Heart right ventricle (tissue), 16 donors: ENCODE measurements at regions of chr4 and their contacts with region 1.

Region 1: DNA sequence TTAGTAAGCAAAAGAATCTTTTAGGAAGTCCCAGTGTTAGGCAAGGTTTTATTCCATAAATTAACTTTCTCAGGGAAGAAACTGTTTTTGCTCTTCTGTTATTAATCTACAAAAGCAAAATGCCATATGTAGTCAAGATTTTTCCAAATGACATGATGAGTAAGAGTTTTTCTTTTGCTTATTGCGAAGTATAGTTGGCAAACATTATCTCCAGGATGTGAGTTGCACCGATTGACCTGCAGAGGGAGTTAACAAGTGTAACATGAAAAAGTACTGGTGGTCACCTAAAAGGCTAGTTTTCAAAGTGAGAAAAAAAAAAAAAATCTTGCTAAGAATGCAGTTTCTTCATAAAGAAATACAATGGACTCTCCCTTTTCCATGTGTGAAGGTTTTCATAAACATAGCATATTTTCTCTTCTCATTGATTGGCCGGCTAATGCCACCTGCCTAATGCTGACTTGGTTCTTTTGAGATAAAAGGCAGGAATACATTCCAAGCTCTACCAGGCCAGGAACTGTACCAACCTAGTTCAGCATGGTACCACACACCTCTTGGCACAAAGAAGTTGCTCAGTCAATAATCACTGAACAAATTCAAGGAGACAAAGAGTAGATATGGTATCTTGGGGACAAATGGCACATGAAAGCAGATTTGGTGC is 100.2 kb downstream of the LNX1 start:
- DNase-seq: peak in 1 of 2 donors; percentile 30
- ATAC-seq: peak in 6 of 8 donors; percentile 42 to 72 (median 52)
- H3K4me3 ChIP-seq: no peak overlapping the region
- H3K27ac ChIP-seq: peak overlapping the region in 4 of 10 donors; percentile 12 to 65 (median 25)
- H3K4me1 ChIP-seq: peaks cover 0 to 16% (median 8%) of the 10 kb centered on the region in 9 donors
- H3K27me3 ChIP-seq: peaks cover 0 to 5% (median 0%) of the 10 kb centered on the region in 7 donors
- CTCF ChIP-seq: peak; percentile 37 to 78 (median 71)

Region 2: GRCh38 chr4:53161051-53161786 is 329.9 kb before region 1 on chr4:
- intact Hi-C with region 1: no loop called
- DNase-seq: no peak
- ATAC-seq: peak in 1 of 8 donors; percentile 55
- H3K4me3 ChIP-seq: no peak overlapping the region
- H3K27ac ChIP-seq: peak overlapping the region in 5 of 10 donors; percentile 9 to 42 (median 22)
- H3K4me1 ChIP-seq: peaks cover 0 to 12% (median 9%) of the 10 kb centered on the region in 9 donors
- H3K27me3 ChIP-seq: no peaks in the 10 kb centered on the region
- CTCF ChIP-seq: no peak

Region 3: DNA sequence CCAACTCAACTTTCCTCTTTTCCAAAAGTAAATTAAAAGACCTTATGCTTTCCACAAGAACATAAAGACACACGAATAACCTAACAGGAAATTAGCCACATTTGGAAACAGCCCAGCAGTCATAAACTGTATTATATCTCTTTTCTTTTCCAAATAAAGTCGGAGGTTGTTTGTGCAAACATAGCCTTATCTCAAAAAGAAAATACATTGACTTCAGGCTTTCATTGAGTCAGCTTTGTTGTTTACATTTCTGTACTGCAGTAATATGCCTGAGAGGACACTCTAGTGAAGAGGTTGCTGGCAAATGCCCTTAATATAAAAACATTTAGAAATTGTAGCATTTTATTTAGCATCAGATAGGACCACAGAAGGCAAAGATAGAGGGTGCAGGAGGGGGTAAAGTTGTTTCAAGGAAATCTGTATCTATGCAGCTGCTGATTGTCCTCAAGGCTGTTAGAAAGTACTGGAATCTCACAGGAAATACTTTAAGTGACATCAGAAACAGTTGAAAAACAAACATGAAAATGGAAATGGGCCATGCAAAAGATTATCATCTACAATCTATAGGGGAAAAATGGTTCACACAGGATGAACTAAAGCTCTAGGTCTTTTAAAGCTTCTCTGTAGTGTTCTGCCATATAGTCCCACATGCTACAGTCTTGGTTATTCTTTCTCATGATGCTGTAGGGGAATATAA is 85.7 kb after region 1 on chr4:
- intact Hi-C with region 1: no loop called
- DNase-seq: no peak
- ATAC-seq: no peak
- H3K4me3 ChIP-seq: no peak overlapping the region
- H3K27ac ChIP-seq: peak overlapping the region in 2 of 10 donors; percentile 16 to 20
- H3K4me1 ChIP-seq: peaks cover 0 to 17% (median 5%) of the 10 kb centered on the region in 9 donors
- H3K27me3 ChIP-seq: no peaks in the 10 kb centered on the region
- CTCF ChIP-seq: no peak

Region 4: DNA sequence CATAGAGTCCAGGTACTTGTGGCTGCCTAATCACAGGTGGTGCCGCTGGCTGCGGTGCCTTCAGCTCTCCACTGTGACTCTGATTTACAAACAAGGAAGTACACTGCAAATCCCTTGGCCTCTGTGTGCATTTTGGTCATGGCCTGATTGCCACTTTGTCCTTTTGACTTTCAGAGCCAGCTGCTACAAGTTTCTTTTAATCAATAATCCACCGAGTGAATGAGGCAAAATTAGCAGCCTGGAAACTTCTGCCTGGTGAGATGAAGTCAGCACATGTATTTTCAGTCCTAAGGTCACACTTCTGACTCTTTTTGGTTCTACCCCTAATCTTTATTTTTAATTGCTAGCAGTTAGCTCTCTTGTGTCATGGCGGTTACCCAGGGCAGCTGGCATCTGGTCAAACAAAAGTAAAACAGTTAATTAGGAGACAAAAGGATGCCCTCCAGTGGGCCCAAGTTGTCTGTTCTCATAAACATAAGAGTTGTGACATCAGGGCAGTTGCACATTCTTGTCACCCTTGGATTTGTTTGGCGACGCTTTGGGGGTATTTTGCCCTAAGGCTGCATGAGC is 162.5 kb after region 1 on chr4:
- intact Hi-C with region 1: loop called in 3 of 10 experiments (anchors 5 kb)
- DNase-seq: no peak
- ATAC-seq: peak in 4 of 8 donors; percentile 38 to 49 (median 46)
- H3K4me3 ChIP-seq: no peak overlapping the region
- H3K27ac ChIP-seq: peak overlapping the region in 4 of 10 donors; percentile 15 to 80 (median 44)
- H3K4me1 ChIP-seq: peaks cover 0 to 58% (median 20%) of the 10 kb centered on the region in 9 donors
- H3K27me3 ChIP-seq: no peaks in the 10 kb centered on the region
- CTCF ChIP-seq: peak in 6 of 9 donors; percentile 7 to 32 (median 18)

Region 5: GRCh38 chr4:53804719-53805118 is 313.6 kb after region 1 on chr4:
- intact Hi-C with region 1: loop called in 3 of 10 experiments (anchors 10 kb)
- DNase-seq: peak in 1 of 2 donors; percentile 13
- ATAC-seq: no peak
- H3K4me3 ChIP-seq: no peak overlapping the region
- H3K27ac ChIP-seq: no peak overlapping the region
- H3K4me1 ChIP-seq: no peaks in the 10 kb centered on the region
- H3K27me3 ChIP-seq: no peaks in the 10 kb centered on the region
- CTCF ChIP-seq: peak in 7 of 9 donors; percentile 35 to 48 (median 44)

Region 6: DNA sequence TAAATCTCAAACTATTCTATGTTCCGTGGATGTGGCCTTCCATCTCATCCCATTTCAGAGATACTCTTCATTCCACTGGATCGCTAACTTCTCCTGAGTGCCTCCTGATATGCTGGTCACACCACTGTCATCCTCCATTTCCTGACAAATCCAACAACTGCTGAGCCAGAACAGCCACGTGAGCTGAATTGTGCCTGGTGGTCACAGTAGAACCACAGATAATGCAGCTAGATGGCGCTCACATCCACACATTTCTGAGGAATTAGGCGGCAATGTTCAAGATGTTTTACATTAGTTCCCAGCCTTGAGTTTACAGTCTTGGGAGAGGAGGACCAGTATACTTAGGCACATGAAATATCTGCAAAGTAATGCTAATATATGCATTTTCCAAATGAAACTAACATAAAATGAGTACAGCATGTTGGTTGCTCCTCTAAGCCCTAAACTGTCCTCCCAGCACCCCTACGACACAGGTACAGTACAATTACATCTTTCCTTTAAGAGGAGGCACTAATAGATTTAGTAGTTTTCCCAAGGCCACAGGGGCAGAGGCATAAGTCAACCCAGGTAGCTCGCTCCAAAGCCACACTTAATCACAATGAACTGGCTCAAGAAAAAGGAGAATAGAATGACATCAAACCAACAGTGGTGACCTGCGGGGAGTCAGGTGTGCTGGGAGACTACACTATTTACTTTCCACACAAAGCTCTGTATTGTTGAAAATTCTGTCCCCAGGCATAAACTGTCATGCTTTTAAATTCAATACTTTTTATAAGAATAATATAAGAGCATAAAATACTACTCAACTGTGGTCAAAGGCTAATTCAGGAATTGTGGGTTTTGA is 439.1 kb after region 1 on chr4:
- intact Hi-C with region 1: loop called in 1 of 10 experiments (anchors 10 kb)
- DNase-seq: peak; percentile 20 to 82
- ATAC-seq: peak; percentile 72 to 94 (median 92)
- H3K4me3 ChIP-seq: no peak overlapping the region
- H3K27ac ChIP-seq: peak overlapping the region in 1 of 10 donors; percentile 12
- H3K4me1 ChIP-seq: peaks cover 0 to 11% (median 0%) of the 10 kb centered on the region in 9 donors
- H3K27me3 ChIP-seq: peaks cover 0 to 11% (median 2%) of the 10 kb centered on the region in 7 donors
- CTCF ChIP-seq: peak; percentile 54 to 85 (median 78)

Region 7: GRCh38 chr4:54228056-54228527 is 737.0 kb after region 1 on chr4:
- intact Hi-C with region 1: loop called in 4 of 10 experiments (anchors 10 kb)
- DNase-seq: peak; percentile 75 to 79
- ATAC-seq: peak; percentile 61 to 81 (median 68)
- H3K4me3 ChIP-seq: peak overlapping the region; percentile 4 to 64 (median 54)
- H3K27ac ChIP-seq: peak overlapping the region; percentile 6 to 85 (median 68)
- H3K4me1 ChIP-seq: peaks cover 5 to 74% (median 62%) of the 10 kb centered on the region in 9 donors
- H3K27me3 ChIP-seq: peaks cover 20 to 100% (median 98%) of the 10 kb centered on the region in 7 donors
- CTCF ChIP-seq: peak; percentile 49 to 87 (median 71)